ENCODE measurements at regions of chr10 and their contacts with region 1.

Region 1: DNA sequence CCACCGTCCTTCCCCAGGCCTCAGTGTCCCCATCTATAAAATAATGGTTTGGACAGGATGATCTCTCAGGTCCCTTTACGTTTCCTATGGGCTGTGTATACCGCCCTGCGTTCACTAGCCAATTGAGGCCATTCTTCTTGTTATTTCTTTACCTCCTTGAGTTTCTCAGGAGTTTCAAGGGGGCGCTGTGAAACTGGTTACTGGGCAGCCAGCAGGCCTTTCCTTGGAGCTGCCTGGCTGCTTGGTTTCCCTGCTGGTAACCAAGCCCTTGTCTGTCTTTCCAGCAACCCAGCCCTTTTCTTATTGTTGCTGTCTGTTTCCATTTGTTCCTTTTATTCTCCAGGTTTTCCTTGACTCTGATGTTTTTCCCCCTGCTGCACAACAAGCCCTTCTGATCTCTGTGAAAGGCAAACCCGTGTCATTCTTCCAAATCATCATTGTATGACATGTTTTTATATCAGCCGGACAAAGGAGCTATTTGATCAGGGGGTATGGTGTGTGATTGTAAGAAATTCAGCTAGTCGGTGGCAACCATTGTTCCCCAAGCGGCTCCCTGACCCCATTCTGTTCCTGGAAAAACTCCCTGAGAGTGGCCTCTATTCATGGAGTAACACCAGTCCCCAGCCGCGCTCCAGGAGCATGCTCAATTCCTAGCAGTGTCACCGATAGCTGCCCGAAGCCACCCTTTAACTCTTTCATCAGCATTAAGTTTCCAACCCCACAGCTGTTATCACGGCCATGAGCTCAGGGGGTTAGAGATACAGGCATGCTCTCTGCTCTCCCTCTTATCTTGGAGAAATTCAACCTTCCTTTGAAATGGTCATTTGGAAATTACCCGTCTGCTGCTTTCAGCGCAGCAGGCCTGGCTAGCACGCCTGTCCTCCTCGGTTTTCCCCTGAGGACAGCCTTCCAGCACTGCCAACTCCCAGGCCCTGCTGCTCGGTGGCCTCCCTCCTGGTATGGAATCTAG is 26.6 kb downstream of the FGF8 start:
- DNase-seq: no peak
- H3K27ac ChIP-seq: no peak overlapping the region
- CTCF ChIP-seq: no peak

Region 2: GRCh38 chr10:101762736-101763135 is 13.4 kb after region 1 on chr10:
- CTCF ChIA-PET with region 1: interaction called, 3 read pairs
- POLR2A ChIA-PET with region 1: interaction called, 16 read pairs
- DNase-seq: no peak
- H3K27ac ChIP-seq: no peak overlapping the region
- CTCF ChIP-seq: no peak

Measured in RWPE1 (cell line).